ENCODE measurements at regions of chr10 and their contacts with region 1.

Region 1: DNA sequence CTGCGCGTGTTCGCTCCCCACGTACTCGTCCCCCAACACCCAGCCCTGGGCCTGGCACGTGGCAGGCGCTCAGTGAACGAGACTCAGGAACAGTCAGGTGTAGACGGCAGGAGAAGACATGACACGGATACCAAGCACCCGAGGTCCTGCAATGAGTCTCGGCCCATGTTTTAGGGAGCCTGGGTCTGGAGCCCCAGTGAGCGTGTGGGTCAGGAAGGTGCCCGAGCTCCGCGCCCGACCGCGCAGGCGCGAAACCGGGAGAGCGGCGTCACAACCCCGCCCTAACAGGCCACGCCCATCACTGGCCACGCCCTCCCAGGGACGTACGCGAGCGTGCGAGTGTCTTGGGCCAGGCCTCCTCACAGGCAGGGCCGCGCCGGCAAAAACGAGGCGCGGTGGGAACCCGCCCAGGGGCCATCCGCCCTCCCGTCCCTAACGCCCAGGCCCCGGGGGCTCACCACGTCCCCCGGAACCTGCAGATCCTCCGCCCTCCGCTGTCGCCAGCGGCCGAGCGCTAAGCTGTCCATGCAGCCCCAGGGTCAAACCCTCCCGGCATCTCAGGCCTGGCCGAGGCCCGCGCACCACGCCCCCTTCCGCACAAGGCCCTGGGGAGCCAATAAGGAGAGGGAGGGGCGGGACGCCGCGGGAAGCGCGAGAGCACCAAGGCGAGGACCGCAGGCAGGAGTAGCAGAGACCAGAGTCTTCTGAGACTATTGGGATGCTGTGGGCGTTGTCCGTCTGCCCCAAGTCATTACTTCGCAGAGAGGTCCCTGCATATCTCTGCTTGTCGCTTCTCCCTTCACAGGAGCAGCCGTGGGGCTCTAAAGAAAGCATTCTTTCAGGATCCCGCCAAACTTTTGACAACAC is at the start of gene C10orf143:
- DNase-seq: peak; percentile 98
- H3K4me3 ChIP-seq: peak within 1 kb of the TSS; percentile 17 to 86 (median 73)
- H3K27ac ChIP-seq: peak within 1 kb of the TSS; percentile 65
- H3K4me1 ChIP-seq: peaks cover 13% of the 10 kb centered on the region
- H3K27me3 ChIP-seq: no peaks in the 10 kb centered on the region
- CTCF ChIP-seq: no peak
- POLR2A ChIP-seq: peak; percentile 89
- total RNA-seq, gene C10orf143: 0.44 and 0.92 TPM in 2 replicates

Region 2: DNA sequence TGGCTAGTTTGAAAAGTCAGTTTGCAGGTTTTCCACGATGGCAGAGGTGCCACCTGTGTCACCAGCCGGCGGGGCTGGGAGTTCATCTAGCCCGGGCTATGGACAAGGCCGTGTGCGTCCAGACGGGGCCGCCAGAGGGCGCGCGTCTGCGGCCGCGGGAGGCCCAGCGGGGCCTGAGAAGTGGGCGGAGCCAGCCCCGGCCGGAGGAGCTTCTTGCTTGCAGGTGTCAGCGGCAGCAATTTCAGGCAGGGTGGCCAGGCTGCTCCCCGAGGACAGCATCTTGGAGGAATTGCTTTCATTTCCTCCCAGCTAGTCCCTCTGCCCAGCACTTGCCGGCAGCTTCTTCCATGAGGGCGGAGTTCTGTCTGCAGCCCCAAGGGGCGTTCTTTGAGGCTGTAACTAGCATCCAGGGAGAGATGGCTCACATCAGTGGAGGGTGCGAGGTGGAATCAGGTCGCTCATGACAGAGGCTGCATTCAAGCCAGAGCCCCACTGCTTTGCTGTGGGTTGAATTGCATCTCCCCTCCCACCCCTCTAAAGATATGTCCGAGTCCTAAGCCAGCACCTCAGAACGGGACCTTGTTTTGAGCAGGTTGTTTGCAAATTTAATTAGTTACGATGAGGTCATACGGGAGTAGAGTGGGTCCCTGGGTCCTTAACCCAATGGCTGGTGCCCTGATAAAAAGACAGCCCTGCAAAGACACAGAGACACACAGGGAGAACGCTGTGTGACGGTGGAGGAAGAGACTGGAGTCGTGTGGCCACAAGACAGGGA is 1898.3 kb before region 1 on chr10:
- CTCF ChIA-PET with region 1: interaction called, 15 read pairs
- POLR2A ChIA-PET with region 1: no interaction called
- dilution Hi-C with region 1: no loop called
- intact Hi-C with region 1: loop called (anchors 2 kb)
- DNase-seq: peak; percentile 72
- H3K4me3 ChIP-seq: no peak overlapping the region
- H3K27ac ChIP-seq: no peak overlapping the region
- H3K4me1 ChIP-seq: peaks cover 9% of the 10 kb centered on the region
- H3K27me3 ChIP-seq: no peaks in the 10 kb centered on the region
- CTCF ChIP-seq: peak; percentile 99 to 100
- POLR2A ChIP-seq: no peak

Region 3: GRCh38 chr10:129039406-129040370 is 1070.8 kb before region 1 on chr10:
- CTCF ChIA-PET with region 1: interaction called, 3 read pairs
- POLR2A ChIA-PET with region 1: interaction called, 3 read pairs
- dilution Hi-C with region 1: no loop called
- intact Hi-C with region 1: loop called (anchors 2 kb)
- DNase-seq: peak; percentile 71
- H3K4me3 ChIP-seq: peak overlapping the region in 1 of 3 experiments; percentile 19
- H3K27ac ChIP-seq: peak overlapping the region; percentile 48
- H3K4me1 ChIP-seq: peaks cover 65% of the 10 kb centered on the region
- H3K27me3 ChIP-seq: no peaks in the 10 kb centered on the region
- CTCF ChIP-seq: peak in 1 of 2 donors; percentile 8
- POLR2A ChIP-seq: no peak

Region 4: GRCh38 chr10:129466703-129467358 is 643.6 kb before region 1 on chr10 and contains the start of gene MGMT:
- CTCF ChIA-PET with region 1: interaction called, 3 read pairs
- POLR2A ChIA-PET with region 1: no interaction called
- dilution Hi-C with region 1: no loop called
- intact Hi-C with region 1: loop called (anchors 1 kb)
- DNase-seq: peak; percentile 50
- H3K4me3 ChIP-seq: peak within 1 kb of the TSS; percentile 34 to 64 (median 63)
- H3K27ac ChIP-seq: peak within 1 kb of the TSS; percentile 25
- H3K4me1 ChIP-seq: peaks cover 10% of the 10 kb centered on the region
- H3K27me3 ChIP-seq: no peaks in the 10 kb centered on the region
- CTCF ChIP-seq: no peak
- POLR2A ChIP-seq: peak; percentile 61
- total RNA-seq, gene MGMT: 11.1 and 15.0 TPM in 2 replicates

Region 5: GRCh38 chr10:130099344-130099743 is 11.1 kb before region 1 on chr10:
- CTCF ChIA-PET with region 1: interaction called, 23 read pairs
- POLR2A ChIA-PET with region 1: no interaction called
- dilution Hi-C with region 1: no loop called
- intact Hi-C with region 1: no loop called
- DNase-seq: no peak
- H3K4me3 ChIP-seq: no peak overlapping the region
- H3K27ac ChIP-seq: no peak overlapping the region
- H3K4me1 ChIP-seq: no peaks in the 10 kb centered on the region
- H3K27me3 ChIP-seq: no peaks in the 10 kb centered on the region
- CTCF ChIP-seq: no peak
- POLR2A ChIP-seq: no peak

Region 6: GRCh38 chr10:130136226-130137089 is 26.0 kb after region 1 on chr10 and contains the start of gene GLRX3:
- CTCF ChIA-PET with region 1: interaction called, 46 read pairs
- POLR2A ChIA-PET with region 1: interaction called, 24 read pairs
- dilution Hi-C with region 1: no loop called
- intact Hi-C with region 1: loop called (anchors 1 kb)
- DNase-seq: peak; percentile 80
- H3K4me3 ChIP-seq: peak within 1 kb of the TSS; percentile 80 to 95 (median 83)
- H3K27ac ChIP-seq: peak within 1 kb of the TSS; percentile 57
- H3K4me1 ChIP-seq: peaks cover 19% of the 10 kb centered on the region
- H3K27me3 ChIP-seq: peaks cover 0 to 2% of the 10 kb centered on the region in 2 experiments
- CTCF ChIP-seq: no peak
- POLR2A ChIP-seq: peak; percentile 84
- total RNA-seq, gene GLRX3: 132 and 137 TPM in 2 replicates

Region 7: DNA sequence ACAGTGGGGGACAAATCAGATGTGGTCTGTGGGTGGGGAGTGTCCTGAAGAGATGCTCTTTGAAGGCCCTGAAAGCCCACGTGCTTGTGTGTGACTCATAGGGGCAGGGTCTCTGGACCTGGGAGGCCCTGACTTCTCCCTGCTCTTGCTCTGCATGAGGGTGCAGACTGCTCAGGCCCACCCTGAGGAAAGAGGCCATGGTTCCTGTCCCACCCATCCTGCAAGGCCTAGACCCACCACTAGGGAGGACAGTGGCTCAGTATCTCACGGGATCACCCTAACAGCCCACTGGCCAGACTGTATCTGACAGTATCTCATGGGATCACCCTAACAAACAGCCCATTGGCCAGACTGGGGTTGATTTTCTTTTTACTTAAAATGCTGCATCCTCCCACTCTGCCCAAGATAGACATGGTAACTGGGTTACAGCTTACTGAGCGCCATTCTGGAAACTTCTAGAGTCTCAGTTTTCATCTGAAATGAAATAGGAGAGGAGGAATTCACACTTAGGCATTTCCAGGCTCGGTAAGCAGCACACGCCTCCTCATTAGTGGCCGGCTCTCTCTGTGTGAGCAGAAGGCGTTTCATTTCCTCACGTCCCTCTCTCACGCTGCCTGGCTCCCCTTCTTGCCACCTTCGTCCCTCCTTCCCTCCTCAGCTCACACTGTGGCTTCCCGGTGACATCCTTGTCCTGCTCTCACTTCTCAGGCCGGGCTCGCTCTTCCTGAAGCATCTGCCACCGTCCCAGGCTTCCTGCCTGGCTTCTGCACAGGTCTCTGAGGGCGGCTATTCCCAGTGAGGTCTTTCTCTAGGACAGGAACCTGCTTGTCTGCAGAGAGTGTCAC is 268.3 kb after region 1 on chr10:
- CTCF ChIA-PET with region 1: no interaction called
- POLR2A ChIA-PET with region 1: no interaction called
- dilution Hi-C with region 1: no loop called
- intact Hi-C with region 1: no loop called
- DNase-seq: no peak
- H3K4me3 ChIP-seq: no peak overlapping the region
- H3K27ac ChIP-seq: no peak overlapping the region
- H3K4me1 ChIP-seq: no peaks in the 10 kb centered on the region
- H3K27me3 ChIP-seq: no peaks in the 10 kb centered on the region
- CTCF ChIP-seq: no peak
- POLR2A ChIP-seq: no peak